Heart right ventricle (tissue), 16 donors: ENCODE measurements at regions of chr15 and their contacts with region 1.

Region 1: DNA sequence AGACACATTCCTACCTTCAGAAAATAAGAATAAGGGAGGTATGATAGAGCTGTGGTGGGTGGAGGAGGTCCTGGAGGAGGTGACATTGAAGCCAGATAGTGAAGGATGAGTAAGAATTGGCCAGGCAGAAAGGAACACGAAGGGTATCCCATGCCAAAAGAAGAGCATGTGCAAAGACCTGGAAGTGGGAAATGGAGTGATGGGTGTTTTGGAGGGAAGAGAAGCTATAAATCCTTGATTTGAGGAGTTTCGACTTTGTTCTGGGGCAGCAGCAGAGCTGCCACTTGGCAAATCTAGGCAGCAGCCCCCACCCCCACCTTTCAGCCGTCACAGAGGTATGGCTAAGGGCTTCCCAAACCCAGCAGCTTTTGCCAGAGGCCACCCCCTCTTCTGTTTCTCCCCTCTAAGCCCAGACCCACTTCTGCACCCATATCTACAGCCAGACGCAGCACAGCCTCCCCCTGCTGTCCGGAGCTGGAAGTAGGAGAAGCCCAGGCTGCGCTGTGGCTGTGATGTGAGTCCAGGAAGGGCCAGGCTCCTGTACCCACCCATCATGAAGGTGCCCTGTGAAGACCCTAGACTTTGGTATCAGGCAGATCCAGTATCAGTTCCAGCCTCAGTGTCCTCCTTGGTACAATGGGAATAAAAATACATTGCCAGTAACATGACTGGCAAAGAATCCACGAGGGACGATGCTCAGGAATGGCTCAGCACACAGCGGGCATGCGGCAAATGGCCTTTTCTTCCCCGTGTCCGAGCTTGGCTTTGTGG is 188.7 kb upstream of the LINGO1 start:
- DNase-seq: peak; percentile 48 to 54
- ATAC-seq: peak in 7 of 8 donors; percentile 60 to 87 (median 81)
- H3K4me3 ChIP-seq: no peak overlapping the region
- H3K27ac ChIP-seq: no peak overlapping the region
- H3K4me1 ChIP-seq: peaks cover 0 to 11% (median 4%) of the 10 kb centered on the region in 9 donors
- H3K27me3 ChIP-seq: peaks cover 17 to 69% (median 63%) of the 10 kb centered on the region in 7 donors
- CTCF ChIP-seq: peak; percentile 40 to 75 (median 64)

Region 2: DNA sequence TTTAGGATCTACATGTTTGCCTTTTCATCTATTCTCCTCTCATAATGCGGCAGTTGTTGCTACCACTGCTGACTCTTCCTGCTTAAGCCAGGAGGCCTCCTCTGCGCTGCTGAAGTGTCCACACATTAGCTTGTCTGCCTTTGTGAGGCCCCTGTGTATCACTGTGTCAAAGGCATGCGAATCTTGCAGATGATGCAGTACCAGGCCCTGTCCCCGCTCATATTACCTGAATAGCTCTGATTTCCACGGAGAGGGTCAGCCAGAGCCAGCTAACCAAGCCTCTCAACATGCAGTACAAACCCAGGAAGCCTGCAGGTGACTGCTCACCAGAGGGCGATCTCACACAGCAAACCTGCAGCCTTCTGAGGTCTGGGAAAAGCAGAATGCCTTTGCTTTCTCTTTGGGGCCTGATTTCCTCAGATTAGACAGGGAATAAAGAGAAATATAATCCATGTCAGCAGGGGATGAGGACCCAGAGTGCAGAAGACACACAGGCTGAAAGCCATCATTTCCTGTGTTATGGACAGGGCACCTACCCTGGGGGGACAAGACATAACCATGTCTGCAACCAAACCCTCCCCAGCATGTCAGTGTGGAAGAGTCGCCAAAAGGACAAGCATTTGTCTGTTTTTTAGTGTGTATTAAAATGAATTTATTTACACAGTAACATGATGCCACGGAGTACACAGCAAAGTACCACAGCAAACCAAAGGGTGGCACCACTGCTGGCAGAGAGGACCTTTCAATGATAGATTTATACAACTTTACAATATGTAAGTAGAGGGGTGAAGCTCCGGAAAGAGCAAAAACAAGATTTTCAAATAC is 713.6 kb before region 1 on chr15:
- intact Hi-C with region 1: loop called in 1 of 10 experiments (anchors 10 kb)
- DNase-seq: peak; percentile 51 to 65
- ATAC-seq: peak; percentile 46 to 82 (median 76)
- H3K4me3 ChIP-seq: no peak overlapping the region
- H3K27ac ChIP-seq: peak overlapping the region in 8 of 10 donors; percentile 4 to 73 (median 61)
- H3K4me1 ChIP-seq: peaks cover 20 to 74% (median 36%) of the 10 kb centered on the region in 9 donors
- H3K27me3 ChIP-seq: no peaks in the 10 kb centered on the region
- CTCF ChIP-seq: peak; percentile 39 to 77 (median 62)

Region 3: GRCh38 chr15:77659350-77660321 is 161.7 kb before region 1 on chr15:
- intact Hi-C with region 1: loop called in 5 of 10 experiments (anchors 2 to 10 kb)
- DNase-seq: peak; percentile 35 to 42
- ATAC-seq: peak in 6 of 8 donors; percentile 40 to 71 (median 48)
- H3K4me3 ChIP-seq: no peak overlapping the region
- H3K27ac ChIP-seq: no peak overlapping the region
- H3K4me1 ChIP-seq: no peaks in the 10 kb centered on the region
- H3K27me3 ChIP-seq: peaks cover 0 to 45% (median 33%) of the 10 kb centered on the region in 7 donors
- CTCF ChIP-seq: peak in 8 of 9 donors; percentile 12 to 68 (median 57)

Region 4: DNA sequence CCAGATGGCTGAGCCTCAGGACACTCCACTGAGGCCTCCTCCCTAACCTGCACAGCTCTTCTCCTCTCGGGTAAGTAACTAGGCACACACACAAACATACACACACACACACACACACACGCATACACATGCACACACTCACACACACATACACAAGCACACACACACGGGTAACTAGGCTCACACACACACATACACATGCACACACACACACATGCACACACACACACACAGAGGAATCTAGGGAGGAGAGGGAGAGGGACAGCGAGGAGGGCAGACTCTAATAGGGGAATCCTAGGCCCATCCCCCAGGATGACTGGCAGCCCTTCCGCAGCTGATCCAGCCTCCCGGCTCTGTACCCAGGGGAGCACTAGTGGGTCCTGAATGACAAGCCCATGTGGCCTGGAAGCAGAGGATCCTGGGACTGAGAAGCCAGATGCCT is 11.2 kb before region 1 on chr15:
- intact Hi-C with region 1: no loop called
- DNase-seq: peak in 1 of 2 donors; percentile 16
- ATAC-seq: peak in 6 of 8 donors; percentile 42 to 64 (median 54)
- H3K4me3 ChIP-seq: no peak overlapping the region
- H3K27ac ChIP-seq: no peak overlapping the region
- H3K4me1 ChIP-seq: no peaks in the 10 kb centered on the region
- H3K27me3 ChIP-seq: peaks cover 0 to 34% (median 14%) of the 10 kb centered on the region in 7 donors
- CTCF ChIP-seq: no peak